ENCODE measurements at regions of chr22 and their contacts with region 1.

Region 1: GRCh38 chr22:37807410-37808293 is at the start of gene GCAT:
- DNase-seq: peak; percentile 96
- H3K4me3 ChIP-seq: peak within 1 kb of the TSS; percentile 75 to 80 (median 79)
- H3K27ac ChIP-seq: peak within 1 kb of the TSS; percentile 41
- H3K4me1 ChIP-seq: peaks cover 34% of the 10 kb centered on the region
- H3K27me3 ChIP-seq: no peaks in the 10 kb centered on the region
- CTCF ChIP-seq: no peak
- total RNA-seq, gene GCAT: 17.3 to 22.4 TPM

Region 2: DNA sequence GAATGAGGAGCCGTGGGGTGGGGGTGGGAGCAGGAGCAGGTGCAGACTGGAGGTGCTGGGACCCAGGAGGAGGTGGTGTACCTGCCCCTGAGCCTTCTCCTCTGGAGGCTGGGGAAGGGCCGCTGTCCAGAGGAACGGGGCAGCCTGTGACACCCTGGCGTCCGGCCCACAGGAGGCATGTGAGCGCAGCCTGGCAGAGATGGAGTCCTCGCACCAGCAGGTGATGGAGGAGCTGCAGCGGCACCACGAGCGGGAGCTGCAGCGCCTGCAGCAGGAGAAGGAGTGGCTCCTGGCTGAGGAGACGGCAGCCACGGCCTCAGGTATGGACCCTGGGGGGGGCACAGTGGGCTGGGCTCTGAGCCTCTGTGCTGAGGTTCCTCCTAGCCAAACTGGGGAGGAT is 42.2 kb before region 1 on chr22:
- CTCF ChIA-PET with region 1: no interaction called
- dilution Hi-C with region 1: no loop called
- in situ Hi-C with region 1: no loop called
- intact Hi-C with region 1: no loop called
- DNase-seq: no peak
- H3K4me3 ChIP-seq: no peak overlapping the region
- H3K27ac ChIP-seq: no peak overlapping the region
- H3K4me1 ChIP-seq: peaks cover 16% of the 10 kb centered on the region
- H3K27me3 ChIP-seq: no peaks in the 10 kb centered on the region
- CTCF ChIP-seq: no peak

Region 3: GRCh38 chr22:37777122-37777687 is 30.4 kb before region 1 on chr22:
- CTCF ChIA-PET with region 1: no interaction called
- dilution Hi-C with region 1: no loop called
- in situ Hi-C with region 1: no loop called
- intact Hi-C with region 1: loop called (anchors 1 kb)
- DNase-seq: peak; percentile 99
- H3K4me3 ChIP-seq: no peak overlapping the region
- H3K27ac ChIP-seq: peak overlapping the region; percentile 99
- H3K4me1 ChIP-seq: peaks cover 40% of the 10 kb centered on the region
- H3K27me3 ChIP-seq: no peaks in the 10 kb centered on the region
- CTCF ChIP-seq: no peak

Region 4: GRCh38 chr22:37824674-37825641 is 17.3 kb after region 1 on chr22:
- CTCF ChIA-PET with region 1: no interaction called
- dilution Hi-C with region 1: no loop called
- in situ Hi-C with region 1: no loop called
- intact Hi-C with region 1: no loop called
- DNase-seq: peak; percentile 25
- H3K4me3 ChIP-seq: peak overlapping the region in 1 of 3 experiments; percentile 18
- H3K27ac ChIP-seq: no peak overlapping the region
- H3K4me1 ChIP-seq: peaks cover 6% of the 10 kb centered on the region
- H3K27me3 ChIP-seq: peaks cover 2% of the 10 kb centered on the region
- CTCF ChIP-seq: no peak

Region 5: DNA sequence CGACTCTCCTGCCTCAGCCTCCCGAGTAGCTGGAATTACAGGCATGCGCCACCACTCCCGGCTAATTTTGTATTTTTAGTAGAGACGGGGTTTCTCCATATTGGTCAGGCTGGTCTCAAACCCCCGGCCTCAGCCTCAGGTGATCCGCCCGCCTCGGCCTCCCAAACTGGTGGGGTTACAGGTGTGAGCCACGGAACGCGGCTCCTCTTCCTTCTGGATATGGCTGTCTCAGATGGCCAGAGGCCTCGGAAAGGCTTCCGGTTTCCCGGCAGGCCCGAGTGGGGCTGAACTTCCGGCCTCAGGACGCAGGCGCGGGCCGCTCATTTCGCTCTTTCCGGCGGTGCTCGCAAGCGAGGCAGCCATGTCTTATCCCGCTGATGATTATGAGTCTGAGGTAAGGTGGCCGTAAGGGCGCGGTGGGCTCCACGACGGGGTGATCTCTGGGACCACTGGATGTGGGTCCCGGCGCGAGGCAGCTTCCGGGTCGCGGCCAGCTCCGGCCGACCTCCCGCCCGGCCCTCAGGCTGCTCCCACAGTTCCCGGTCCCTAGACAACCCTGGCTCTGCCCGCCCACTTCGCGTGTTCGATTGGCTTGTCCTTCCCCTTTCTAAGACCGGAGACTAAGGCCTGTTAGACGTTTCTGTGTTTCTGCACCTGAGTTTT is 41.6 kb after region 1 on chr22 and contains the start of gene EIF3L:
- CTCF ChIA-PET with region 1: no interaction called
- dilution Hi-C with region 1: no loop called
- in situ Hi-C with region 1: no loop called
- intact Hi-C with region 1: loop called (anchors 2 kb)
- DNase-seq: peak; percentile 87
- H3K4me3 ChIP-seq: peak within 1 kb of the TSS; percentile 70 to 92 (median 86)
- H3K27ac ChIP-seq: peak within 1 kb of the TSS; percentile 84
- H3K4me1 ChIP-seq: peaks cover 10% of the 10 kb centered on the region
- H3K27me3 ChIP-seq: no peaks in the 10 kb centered on the region
- CTCF ChIP-seq: no peak
- total RNA-seq, gene EIF3L: 350 to 368 TPM

Measured in mammary epithelial cell (primary cell).